Activated naive CD4-positive, alpha-beta T cell treated with anti-CD3 and anti-CD28 coated beads for 36 hours (primary cell): ENCODE measurements at regions of chr1 and their contacts with region 1.

Region 1: GRCh38 chr1:167947733-167948132 is 10.9 kb upstream of the MPC2 start:
- DNase-seq: no peak
- H3K4me3 Mint-ChIP-seq: no peak overlapping the region
- H3K27ac Mint-ChIP-seq: no peak overlapping the region
- H3K4me1 Mint-ChIP-seq: peaks cover 37% of the 10 kb centered on the region
- H3K27me3 Mint-ChIP-seq: no peaks in the 10 kb centered on the region

Region 2: GRCh38 chr1:167650269-167651160 is 297.2 kb before region 1 on chr1:
- CTCF ChIA-PET with region 1: no interaction called
- intact Hi-C with region 1: no loop called
- DNase-seq: peak; percentile 39
- H3K4me3 Mint-ChIP-seq: peak overlapping the region; percentile 13
- H3K27ac Mint-ChIP-seq: peak overlapping the region; percentile 55
- H3K4me1 Mint-ChIP-seq: peaks cover 84% of the 10 kb centered on the region
- H3K27me3 Mint-ChIP-seq: no peaks in the 10 kb centered on the region

Region 3: DNA sequence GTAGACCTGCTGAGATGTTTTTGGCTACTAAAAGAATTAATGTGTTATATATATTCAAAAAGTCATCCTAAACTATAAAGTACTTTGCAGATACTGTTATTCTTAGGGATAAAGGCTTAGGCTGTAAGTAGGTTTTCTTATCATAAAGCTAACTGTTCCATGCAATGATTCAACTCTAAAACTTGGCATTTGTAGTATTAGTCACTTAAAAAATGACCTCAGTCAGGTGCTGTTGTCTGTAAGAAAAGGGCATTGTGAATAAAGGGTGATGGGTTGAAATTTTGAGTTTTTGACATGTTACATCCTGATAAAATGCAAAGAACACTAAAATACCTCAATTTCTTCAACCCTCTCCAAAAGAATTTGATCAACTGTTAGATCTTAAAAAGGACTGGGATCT is 66.7 kb before region 1 on chr1:
- CTCF ChIA-PET with region 1: interaction called, 3 read pairs
- intact Hi-C with region 1: loop called (anchors 2 kb)
- DNase-seq: no peak
- H3K4me3 Mint-ChIP-seq: no peak overlapping the region
- H3K27ac Mint-ChIP-seq: no peak overlapping the region
- H3K4me1 Mint-ChIP-seq: no peaks in the 10 kb centered on the region
- H3K27me3 Mint-ChIP-seq: no peaks in the 10 kb centered on the region